Activated CD4-positive, alpha-beta T cell treated with anti-CD3 and anti-CD28 coated beads for 36 hours (primary cell): ENCODE measurements at regions of chr15 and their contacts with region 1.

Region 1: DNA sequence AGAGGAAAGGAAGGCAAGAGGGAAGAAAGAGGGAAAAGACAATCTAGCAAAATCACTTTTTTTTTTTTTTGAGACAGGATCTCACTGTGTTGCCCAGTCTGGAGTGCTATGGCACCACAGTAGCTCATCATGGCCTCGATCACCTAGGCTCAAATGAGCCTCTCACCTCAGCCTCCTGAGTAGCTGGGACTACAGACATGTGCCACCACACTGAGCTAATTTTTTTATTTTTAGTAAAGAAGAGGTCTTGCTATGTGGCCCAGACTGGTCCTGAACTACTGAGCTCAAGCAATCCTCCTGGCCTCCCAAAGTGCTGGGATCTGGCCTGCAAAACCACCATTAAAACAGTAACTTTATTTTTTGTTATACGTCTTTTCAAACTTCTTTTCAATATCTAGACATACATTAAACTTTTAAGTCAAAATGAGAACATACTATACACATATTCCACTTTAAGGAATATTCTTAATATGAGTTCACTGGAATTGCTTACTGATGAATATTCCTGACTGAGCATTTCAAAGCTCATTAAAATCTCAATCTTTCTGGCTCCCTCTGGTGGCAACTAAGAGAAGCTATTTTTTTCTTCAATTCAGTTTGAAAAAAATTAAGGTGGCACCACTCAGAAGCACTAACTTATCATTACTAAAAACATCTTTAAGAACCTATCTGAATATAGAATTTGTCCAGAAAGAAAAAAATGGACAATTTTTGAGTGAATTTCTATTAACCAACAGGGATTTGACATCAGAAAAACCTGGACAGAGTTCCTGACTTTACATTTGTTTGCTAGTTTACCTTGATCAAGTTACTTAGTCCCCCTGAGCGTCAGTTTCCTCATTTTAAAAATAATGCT is 40.9 kb downstream of the UACA start:
- DNase-seq: no peak
- ATAC-seq: no peak
- H3K4me3 Mint-ChIP-seq: no peak overlapping the region
- H3K27ac Mint-ChIP-seq: no peak overlapping the region
- H3K4me1 Mint-ChIP-seq: no peaks in the 10 kb centered on the region
- H3K27me3 Mint-ChIP-seq: peaks cover 4% of the 10 kb centered on the region

Region 2: DNA sequence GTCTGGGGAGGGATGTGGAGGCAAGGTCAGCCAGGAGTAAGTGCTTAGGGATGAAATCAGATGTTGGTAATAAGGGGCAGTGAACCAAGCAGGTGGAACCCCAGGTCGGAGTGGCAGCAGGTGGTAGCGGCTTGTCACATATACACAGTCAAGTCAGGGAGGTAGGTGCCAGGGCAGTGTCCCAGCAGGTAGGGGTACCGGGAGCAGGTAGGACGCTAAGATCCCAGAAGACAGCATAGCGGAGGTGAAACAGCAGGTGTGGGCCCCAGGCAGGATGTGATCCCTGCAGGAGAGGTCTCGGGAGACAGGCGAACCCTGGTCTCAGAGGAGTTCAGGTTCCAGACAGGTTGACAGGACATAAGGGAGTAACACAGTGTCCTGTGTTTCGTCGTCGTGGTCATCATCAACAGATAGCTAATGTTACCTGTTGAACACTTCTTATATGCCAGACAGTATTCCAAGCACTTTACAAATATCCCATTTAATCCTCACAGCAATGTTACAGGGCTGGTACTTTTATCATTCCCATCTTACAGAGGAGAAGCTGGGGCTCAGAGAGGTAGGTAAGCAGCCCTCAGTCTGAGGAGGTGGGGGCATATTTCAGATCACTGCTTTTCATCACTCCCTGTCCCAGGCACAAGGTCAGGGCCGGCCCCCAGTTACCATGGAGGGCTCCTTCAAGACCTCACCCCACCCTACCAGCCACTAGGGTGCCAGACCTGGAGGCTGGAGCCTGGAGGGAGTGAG is 200.7 kb before region 1 on chr15:
- CTCF ChIA-PET with region 1: no interaction called
- POLR2A ChIA-PET with region 1: no interaction called
- intact Hi-C with region 1: no loop called
- DNase-seq: peak; percentile 2
- ATAC-seq: no peak
- H3K4me3 Mint-ChIP-seq: no peak overlapping the region
- H3K27ac Mint-ChIP-seq: no peak overlapping the region
- H3K4me1 Mint-ChIP-seq: peaks cover 19% of the 10 kb centered on the region
- H3K27me3 Mint-ChIP-seq: peaks cover 6% of the 10 kb centered on the region

Region 3: DNA sequence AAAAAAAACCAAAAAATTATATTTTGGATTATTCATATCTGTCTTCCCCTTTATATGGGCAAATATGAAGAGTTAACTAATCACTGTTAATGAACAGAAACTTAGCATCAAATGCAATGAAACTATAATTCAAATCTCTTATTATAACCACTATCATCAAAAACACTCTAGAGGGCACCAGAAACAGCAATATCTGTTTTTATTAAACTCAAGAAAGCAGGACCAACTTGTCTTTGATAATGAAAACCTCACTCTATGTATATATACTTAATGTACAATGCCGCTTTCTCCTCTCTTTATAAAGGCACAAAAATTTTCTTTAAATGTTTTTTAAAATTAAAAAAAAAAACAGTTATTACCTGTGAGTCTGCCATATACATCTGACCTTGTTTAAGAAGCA is 51.8 kb before region 1 on chr15:
- CTCF ChIA-PET with region 1: interaction called, 18 read pairs
- POLR2A ChIA-PET with region 1: no interaction called
- intact Hi-C with region 1: no loop called
- DNase-seq: no peak
- ATAC-seq: no peak
- H3K4me3 Mint-ChIP-seq: no peak overlapping the region
- H3K27ac Mint-ChIP-seq: no peak overlapping the region
- H3K4me1 Mint-ChIP-seq: peaks cover 18% of the 10 kb centered on the region
- H3K27me3 Mint-ChIP-seq: peaks cover 2% of the 10 kb centered on the region

Region 4: DNA sequence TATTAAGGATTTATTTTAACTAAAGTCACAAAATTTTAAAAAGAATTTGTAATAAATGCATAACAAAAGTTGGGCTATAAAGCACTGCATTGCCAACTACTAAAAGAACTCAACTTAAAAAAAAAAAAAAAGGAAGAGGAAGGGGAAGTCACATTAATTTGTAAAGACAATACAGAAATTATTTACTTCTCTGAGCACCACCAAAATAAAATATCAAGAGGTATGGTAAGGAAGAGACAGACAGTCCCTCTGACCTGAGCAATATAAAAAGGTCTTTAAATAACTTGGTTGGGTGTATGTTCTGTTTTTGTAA is 42.6 kb before region 1 on chr15:
- CTCF ChIA-PET with region 1: interaction called, 24 read pairs
- POLR2A ChIA-PET with region 1: no interaction called
- intact Hi-C with region 1: no loop called
- DNase-seq: no peak
- ATAC-seq: no peak
- H3K4me3 Mint-ChIP-seq: no peak overlapping the region
- H3K27ac Mint-ChIP-seq: no peak overlapping the region
- H3K4me1 Mint-ChIP-seq: peaks cover 2% of the 10 kb centered on the region
- H3K27me3 Mint-ChIP-seq: no peaks in the 10 kb centered on the region

Region 5: GRCh38 chr15:70687482-70687881 is 35.0 kb before region 1 on chr15:
- CTCF ChIA-PET with region 1: interaction called, 10 read pairs
- POLR2A ChIA-PET with region 1: no interaction called
- intact Hi-C with region 1: no loop called
- DNase-seq: no peak
- ATAC-seq: no peak
- H3K4me3 Mint-ChIP-seq: no peak overlapping the region
- H3K27ac Mint-ChIP-seq: no peak overlapping the region
- H3K4me1 Mint-ChIP-seq: no peaks in the 10 kb centered on the region
- H3K27me3 Mint-ChIP-seq: peaks cover 2% of the 10 kb centered on the region

Region 6: DNA sequence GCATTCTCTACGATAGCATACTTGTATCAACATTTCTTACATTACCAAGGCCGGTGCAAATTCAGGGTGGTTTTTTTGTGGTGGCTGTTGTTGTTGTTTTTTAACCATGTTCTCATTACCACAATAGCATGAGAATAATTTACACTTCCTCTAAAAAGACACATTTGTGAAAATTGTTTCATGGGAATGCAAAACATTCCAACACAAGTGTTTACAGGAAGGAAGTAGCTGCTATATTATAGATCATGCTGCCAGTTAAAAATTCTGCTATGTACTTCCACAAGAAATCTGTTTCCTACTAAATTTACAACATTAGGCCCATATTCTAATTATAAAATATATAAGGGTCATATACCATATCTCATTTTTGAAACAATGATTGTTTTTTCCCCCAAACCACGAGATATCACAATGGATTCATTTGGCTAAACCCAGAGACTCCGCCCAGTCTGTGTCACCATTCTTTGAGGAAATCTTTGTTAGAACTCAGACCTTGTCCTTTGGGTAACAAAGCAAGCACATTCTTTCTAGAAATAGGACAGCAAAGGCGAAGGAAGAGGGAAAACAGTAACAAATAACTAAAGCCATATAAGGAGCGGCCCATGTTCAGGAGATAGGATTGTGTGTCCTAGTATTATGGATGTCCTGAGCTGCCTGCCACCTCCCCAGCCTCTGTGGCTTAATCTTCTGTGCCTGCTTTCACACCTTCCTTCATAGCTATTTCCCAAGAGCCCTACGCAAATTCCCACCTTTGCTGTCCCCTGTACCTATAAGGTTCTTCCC is 19.2 kb before region 1 on chr15:
- CTCF ChIA-PET with region 1: interaction called, 12 read pairs
- POLR2A ChIA-PET with region 1: no interaction called
- intact Hi-C with region 1: no loop called
- DNase-seq: no peak
- ATAC-seq: no peak
- H3K4me3 Mint-ChIP-seq: no peak overlapping the region
- H3K27ac Mint-ChIP-seq: no peak overlapping the region
- H3K4me1 Mint-ChIP-seq: peaks cover 2% of the 10 kb centered on the region
- H3K27me3 Mint-ChIP-seq: peaks cover 22% of the 10 kb centered on the region

Region 7: DNA sequence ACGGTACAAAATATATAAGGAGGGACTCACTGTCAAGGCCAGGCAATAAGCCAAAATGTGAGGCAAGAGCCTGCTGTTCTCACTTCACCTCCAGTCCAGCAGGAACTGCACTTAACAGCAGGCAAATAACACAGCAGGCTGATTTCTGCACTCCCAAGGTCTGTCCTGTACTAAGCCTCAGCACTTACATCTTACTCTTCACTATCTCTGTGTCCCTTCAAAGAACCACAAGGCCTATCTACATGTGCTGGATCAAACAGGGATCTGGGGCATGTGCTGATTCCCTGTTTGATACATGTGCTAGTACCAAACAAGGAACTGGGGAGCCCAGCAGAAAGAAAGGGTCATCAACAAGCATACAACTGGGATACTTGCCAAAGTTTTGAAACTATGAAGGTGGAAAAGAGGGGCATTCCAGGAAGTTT is 18.6 kb after region 1 on chr15:
- CTCF ChIA-PET with region 1: interaction called, 16 read pairs
- POLR2A ChIA-PET with region 1: no interaction called
- intact Hi-C with region 1: no loop called
- DNase-seq: no peak
- ATAC-seq: no peak
- H3K4me3 Mint-ChIP-seq: no peak overlapping the region
- H3K27ac Mint-ChIP-seq: no peak overlapping the region
- H3K4me1 Mint-ChIP-seq: no peaks in the 10 kb centered on the region
- H3K27me3 Mint-ChIP-seq: peaks cover 2% of the 10 kb centered on the region